SK-N-SH (cell line): ENCODE measurements at regions of chr2 and their contacts with region 1.

Region 1: GRCh38 chr2:96801005-96801785 is 14.9 kb upstream of the CNNM3 start:
- DNase-seq: peak; percentile 93
- H3K4me3 ChIP-seq: peak overlapping the region in 1 of 2 experiments; percentile 40; a peak in 1 of 4 replicates
- H3K27ac ChIP-seq: peak overlapping the region in 1 of 2 experiments; percentile 4; a peak in 1 of 4 replicates
- H3K4me1 ChIP-seq: peaks cover 0 to 12% of the 10 kb centered on the region in 2 experiments; a peak in 1 of 4 replicates
- H3K27me3 ChIP-seq: no peaks in the 10 kb centered on the region
- CTCF ChIP-seq: peak; percentile 81
- EP300 ChIP-seq: no peak
- RAD21 ChIP-seq: peak; percentile 84

Region 2: GRCh38 chr2:96773922-96774321 is 27.3 kb before region 1 on chr2:
- CTCF ChIA-PET with region 1: interaction called, 12 read pairs
- POLR2A ChIA-PET with region 1: no interaction called
- DNase-seq: no peak
- H3K4me3 ChIP-seq: no peak overlapping the region
- H3K27ac ChIP-seq: no peak overlapping the region
- H3K4me1 ChIP-seq: peaks cover 0 to 15% of the 10 kb centered on the region in 2 experiments; a peak in 1 of 4 replicates
- H3K27me3 ChIP-seq: no peaks in the 10 kb centered on the region
- CTCF ChIP-seq: no peak
- EP300 ChIP-seq: no peak
- RAD21 ChIP-seq: no peak

Region 3: DNA sequence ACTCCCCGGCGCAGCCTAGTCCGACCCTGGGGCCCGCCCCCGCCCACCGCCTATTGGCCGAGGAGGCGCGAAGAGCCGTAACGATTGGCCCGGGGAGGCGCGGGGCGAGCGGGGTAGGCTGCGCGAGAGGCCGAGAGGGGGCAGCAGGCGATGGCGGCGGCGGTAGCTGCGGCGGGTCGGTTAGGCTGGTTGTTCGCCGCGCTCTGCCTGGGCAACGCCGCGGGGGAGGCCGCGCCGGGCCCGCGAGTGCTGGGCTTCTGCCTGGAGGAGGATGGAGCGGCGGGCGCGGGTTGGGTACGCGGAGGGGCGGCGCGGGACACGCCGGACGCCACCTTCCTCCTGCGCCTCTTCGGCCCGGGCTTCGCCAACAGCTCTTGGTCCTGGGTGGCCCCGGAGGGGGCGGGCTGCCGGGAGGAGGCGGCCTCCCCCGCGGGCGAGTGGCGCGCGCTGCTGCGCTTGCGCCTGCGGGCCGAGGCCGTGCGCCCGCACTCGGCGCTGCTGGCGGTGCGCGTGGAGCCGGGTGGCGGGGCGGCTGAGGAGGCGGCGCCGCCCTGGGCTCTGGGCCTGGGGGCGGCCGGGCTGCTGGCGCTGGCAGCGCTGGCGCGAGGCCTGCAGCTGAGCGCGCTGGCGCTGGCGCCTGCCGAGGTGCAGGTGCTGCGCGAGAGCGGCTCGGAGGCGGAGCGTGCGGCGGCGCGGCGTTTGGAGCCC is 15.1 kb after region 1 on chr2 and contains the start of gene CNNM3:
- CTCF ChIA-PET with region 1: interaction called, 31 read pairs
- POLR2A ChIA-PET with region 1: no interaction called
- DNase-seq: peak; percentile 99
- H3K4me3 ChIP-seq: peak within 1 kb of the TSS; percentile 73 to 76
- H3K27ac ChIP-seq: peak within 1 kb of the TSS; percentile 39 to 91; a peak in 2 of 4 replicates
- H3K4me1 ChIP-seq: peaks cover 5 to 40% of the 10 kb centered on the region in 2 experiments; a peak in 3 of 4 replicates
- H3K27me3 ChIP-seq: no peaks in the 10 kb centered on the region
- CTCF ChIP-seq: peak; percentile 55
- EP300 ChIP-seq: peak in 1 of 2 experiments; percentile 6; a peak in 1 of 4 replicates
- RAD21 ChIP-seq: no peak
- polyA plus RNA-seq, gene CNNM3: 9.3 and 14.7 TPM in 2 replicates